HEK293 (cell line): ENCODE measurements at regions of chr6 and their contacts with region 1.

Region 1: GRCh38 chr6:52503848-52504781 is 72.7 kb downstream of the TRAM2 start:
- H3K4me3 ChIP-seq: no peak overlapping the region; the same call in 1 of the 2 replicates
- H3K27ac ChIP-seq: peak overlapping the region; percentile 65
- H3K4me1 ChIP-seq: peaks cover 8% of the 10 kb centered on the region
- CTCF ChIP-seq: no peak

Region 2: GRCh38 chr6:52337633-52338290 is 166.4 kb before region 1 on chr6:
- CTCF ChIA-PET with region 1: no interaction called
- POLR2A ChIA-PET with region 1: no interaction called
- H3K4me3 ChIP-seq: no peak overlapping the region
- H3K27ac ChIP-seq: no peak overlapping the region
- H3K4me1 ChIP-seq: no peaks in the 10 kb centered on the region
- CTCF ChIP-seq: no peak

Region 3: GRCh38 chr6:52377538-52378221 is 126.4 kb before region 1 on chr6:
- CTCF ChIA-PET with region 1: no interaction called
- POLR2A ChIA-PET with region 1: no interaction called
- H3K4me3 ChIP-seq: no peak overlapping the region
- H3K27ac ChIP-seq: no peak overlapping the region
- H3K4me1 ChIP-seq: no peaks in the 10 kb centered on the region
- CTCF ChIP-seq: no peak

Region 4: DNA sequence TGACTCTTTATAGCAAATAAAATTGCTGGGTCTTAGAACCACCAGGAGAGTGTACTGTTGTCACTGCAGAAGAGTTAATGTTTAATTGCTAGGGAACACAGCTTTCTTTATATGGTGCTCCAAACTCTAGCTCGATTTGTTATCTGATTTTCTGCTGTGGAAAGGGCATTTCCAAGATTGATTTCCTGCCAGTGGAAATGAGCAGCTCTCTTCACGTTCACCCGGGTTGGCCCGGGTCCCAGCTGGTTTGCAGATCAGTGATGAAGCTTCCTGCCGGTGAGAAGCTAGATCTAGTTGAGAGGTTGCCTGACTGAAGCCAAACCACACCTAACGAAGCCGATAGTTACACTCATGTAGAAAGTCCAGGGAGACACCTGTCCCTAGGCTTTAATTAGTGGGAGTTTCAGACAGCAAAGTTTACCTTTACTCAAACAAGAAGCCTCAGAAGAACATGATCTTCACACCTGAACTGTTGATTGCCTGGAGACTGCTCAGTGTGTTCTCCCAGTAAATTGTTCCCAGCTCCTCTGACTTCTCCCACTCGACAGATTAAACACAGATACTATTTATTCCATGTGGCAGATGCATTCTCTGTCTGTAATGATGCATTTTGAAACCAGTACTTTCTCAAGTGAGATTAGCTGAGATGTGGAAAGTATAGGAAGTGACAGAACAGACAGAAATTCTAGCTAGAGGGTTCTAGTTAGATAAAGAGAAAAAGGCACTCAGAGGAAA is 114.3 kb before region 1 on chr6:
- CTCF ChIA-PET with region 1: no interaction called
- POLR2A ChIA-PET with region 1: no interaction called
- H3K4me3 ChIP-seq: no peak overlapping the region
- H3K27ac ChIP-seq: no peak overlapping the region
- H3K4me1 ChIP-seq: peaks cover 5% of the 10 kb centered on the region
- CTCF ChIP-seq: no peak; the same call in 1 of the 2 replicates

Region 5: GRCh38 chr6:52558266-52559000 is 54.3 kb after region 1 on chr6:
- CTCF ChIA-PET with region 1: no interaction called
- POLR2A ChIA-PET with region 1: no interaction called
- H3K4me3 ChIP-seq: no peak overlapping the region
- H3K27ac ChIP-seq: no peak overlapping the region
- H3K4me1 ChIP-seq: no peaks in the 10 kb centered on the region
- CTCF ChIP-seq: no peak

Region 6: GRCh38 chr6:52590152-52590931 is 86.2 kb after region 1 on chr6:
- CTCF ChIA-PET with region 1: interaction called, 5 read pairs
- POLR2A ChIA-PET with region 1: interaction called, 13 read pairs
- H3K4me3 ChIP-seq: no peak overlapping the region
- H3K27ac ChIP-seq: no peak overlapping the region
- H3K4me1 ChIP-seq: peaks cover 6% of the 10 kb centered on the region
- CTCF ChIP-seq: no peak